Activated CD4-positive, alpha-beta T cell treated with anti-CD3 and anti-CD28 coated beads, Interleukin-2, amount 10 ng/mL, durations not matched to agents 24 days and 14 days (primary cell): ENCODE measurements at regions of chr5 and their contacts with region 1.

Region 1: DNA sequence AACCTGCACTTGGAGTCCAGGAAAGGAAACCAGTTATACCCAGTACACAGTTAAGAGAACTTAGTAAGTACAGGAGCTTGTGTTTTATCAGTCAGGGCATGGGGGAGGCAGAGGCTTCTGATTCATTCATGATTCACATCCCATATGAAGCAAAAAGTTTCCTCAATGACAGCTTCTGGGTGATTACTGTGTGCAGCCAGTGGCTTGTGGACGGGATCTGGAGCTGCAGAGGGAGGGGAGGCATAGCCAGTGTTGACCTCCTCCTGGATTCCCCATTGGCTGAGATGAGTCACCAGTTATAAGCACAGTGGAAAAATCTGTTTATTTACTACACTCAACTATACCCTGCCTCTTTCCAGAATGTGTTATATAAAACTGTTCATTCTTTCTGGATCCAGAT is 17.7 kb downstream of the IL31RA start:
- DNase-seq: peak; percentile 70
- H3K4me3 Mint-ChIP-seq: no peak overlapping the region
- H3K27ac Mint-ChIP-seq: peak overlapping the region; percentile 69
- H3K4me1 Mint-ChIP-seq: peaks cover 21% of the 10 kb centered on the region
- H3K27me3 Mint-ChIP-seq: no peaks in the 10 kb centered on the region

Region 2: GRCh38 chr5:55711968-55712859 is 156.6 kb before region 1 on chr5 and contains the start of gene SLC38A9:
- intact Hi-C with region 1: loop called (anchors 2 kb)
- DNase-seq: peak; percentile 98
- H3K4me3 Mint-ChIP-seq: peak within 1 kb of the TSS; percentile 97
- H3K27ac Mint-ChIP-seq: peak within 1 kb of the TSS; percentile 90
- H3K4me1 Mint-ChIP-seq: peaks cover 28% of the 10 kb centered on the region
- H3K27me3 Mint-ChIP-seq: no peaks in the 10 kb centered on the region
- total RNA-seq, gene SLC38A9: 20.5 and 21.4 TPM in 2 replicates

Region 3: GRCh38 chr5:55771175-55771655 is 97.6 kb before region 1 on chr5:
- intact Hi-C with region 1: loop called (anchors 2 kb)
- DNase-seq: no peak
- H3K4me3 Mint-ChIP-seq: peak overlapping the region; percentile 18
- H3K27ac Mint-ChIP-seq: peak overlapping the region; percentile 74
- H3K4me1 Mint-ChIP-seq: peaks cover 10% of the 10 kb centered on the region
- H3K27me3 Mint-ChIP-seq: peaks cover 4% of the 10 kb centered on the region

Region 4: GRCh38 chr5:55821731-55822512 is 46.9 kb before region 1 on chr5:
- intact Hi-C with region 1: loop called (anchors 5 kb)
- DNase-seq: peak; percentile 70
- H3K4me3 Mint-ChIP-seq: peak overlapping the region; percentile 75
- H3K27ac Mint-ChIP-seq: no peak overlapping the region
- H3K4me1 Mint-ChIP-seq: peaks cover 9% of the 10 kb centered on the region
- H3K27me3 Mint-ChIP-seq: peaks cover 54% of the 10 kb centered on the region

Region 5: GRCh38 chr5:55856516-55857246 is 12.2 kb before region 1 on chr5:
- intact Hi-C with region 1: loop called (anchors 1 kb)
- DNase-seq: peak; percentile 79
- H3K4me3 Mint-ChIP-seq: peak overlapping the region; percentile 41
- H3K27ac Mint-ChIP-seq: peak overlapping the region; percentile 75
- H3K4me1 Mint-ChIP-seq: peaks cover 50% of the 10 kb centered on the region
- H3K27me3 Mint-ChIP-seq: no peaks in the 10 kb centered on the region